ENCODE measurements at regions of chr16 and their contacts with region 1.

Region 1: GRCh38 chr16:69396187-69397061 is 10.6 kb upstream of the TERF2 start:
- DNase-seq: peak; percentile 83
- H3K4me3 Mint-ChIP-seq: peak overlapping the region; percentile 62
- H3K27ac Mint-ChIP-seq: peak overlapping the region; percentile 91
- H3K4me1 Mint-ChIP-seq: peaks cover 48% of the 10 kb centered on the region
- H3K27me3 Mint-ChIP-seq: no peaks in the 10 kb centered on the region
- CTCF ChIP-seq: peak; percentile 67

Region 2: GRCh38 chr16:69286941-69287713 is 109.3 kb before region 1 on chr16:
- CTCF ChIA-PET with region 1: no interaction called
- intact Hi-C with region 1: no loop called
- DNase-seq: peak; percentile 56
- H3K4me3 Mint-ChIP-seq: no peak overlapping the region
- H3K27ac Mint-ChIP-seq: no peak overlapping the region
- H3K4me1 Mint-ChIP-seq: no peaks in the 10 kb centered on the region
- H3K27me3 Mint-ChIP-seq: no peaks in the 10 kb centered on the region
- CTCF ChIP-seq: peak; percentile 76

Region 3: DNA sequence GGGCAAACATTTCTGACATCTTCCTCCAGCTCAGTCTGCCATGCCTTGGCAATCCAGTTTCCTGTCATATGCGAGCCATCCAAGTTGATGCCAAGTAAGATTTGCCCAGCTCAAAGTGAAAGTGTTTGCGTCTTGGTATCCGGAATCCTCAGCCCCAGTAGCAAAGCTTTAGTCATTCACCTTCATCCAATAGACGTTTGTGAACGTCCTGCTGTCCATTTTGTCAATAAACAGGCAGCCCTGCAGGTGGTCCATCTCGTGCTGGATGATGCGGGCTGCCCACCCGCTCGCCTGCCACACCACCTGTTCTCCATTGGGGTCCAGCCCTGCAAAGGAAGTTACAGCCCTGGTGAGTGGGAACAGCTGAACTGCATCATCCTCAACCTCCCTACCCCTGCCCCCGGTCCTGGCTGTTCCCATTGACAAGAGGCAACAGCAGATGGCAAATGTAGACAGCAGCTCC is 67.5 kb before region 1 on chr16:
- CTCF ChIA-PET with region 1: no interaction called
- intact Hi-C with region 1: no loop called
- DNase-seq: no peak
- H3K4me3 Mint-ChIP-seq: peak overlapping the region; percentile 99
- H3K27ac Mint-ChIP-seq: peak overlapping the region; percentile 81
- H3K4me1 Mint-ChIP-seq: peaks cover 33% of the 10 kb centered on the region
- H3K27me3 Mint-ChIP-seq: no peaks in the 10 kb centered on the region
- CTCF ChIP-seq: no peak

Region 4: GRCh38 chr16:69424053-69424934 is 27.9 kb after region 1 on chr16 and contains the start of gene CYB5B:
- CTCF ChIA-PET with region 1: interaction called, 4 read pairs
- intact Hi-C with region 1: loop called (anchors 2 kb)
- DNase-seq: peak; percentile 95
- H3K4me3 Mint-ChIP-seq: peak within 1 kb of the TSS; percentile 91
- H3K27ac Mint-ChIP-seq: peak within 1 kb of the TSS; percentile 97
- H3K4me1 Mint-ChIP-seq: no peaks in the 10 kb centered on the region
- H3K27me3 Mint-ChIP-seq: no peaks in the 10 kb centered on the region
- CTCF ChIP-seq: no peak
- total RNA-seq, gene CYB5B: 177 and 179 TPM in 2 replicates

Region 5: GRCh38 chr16:69443927-69444631 is 47.7 kb after region 1 on chr16:
- CTCF ChIA-PET with region 1: no interaction called
- intact Hi-C with region 1: no loop called
- DNase-seq: no peak
- H3K4me3 Mint-ChIP-seq: no peak overlapping the region
- H3K27ac Mint-ChIP-seq: no peak overlapping the region
- H3K4me1 Mint-ChIP-seq: peaks cover 14% of the 10 kb centered on the region
- H3K27me3 Mint-ChIP-seq: no peaks in the 10 kb centered on the region
- CTCF ChIP-seq: no peak

Region 6: DNA sequence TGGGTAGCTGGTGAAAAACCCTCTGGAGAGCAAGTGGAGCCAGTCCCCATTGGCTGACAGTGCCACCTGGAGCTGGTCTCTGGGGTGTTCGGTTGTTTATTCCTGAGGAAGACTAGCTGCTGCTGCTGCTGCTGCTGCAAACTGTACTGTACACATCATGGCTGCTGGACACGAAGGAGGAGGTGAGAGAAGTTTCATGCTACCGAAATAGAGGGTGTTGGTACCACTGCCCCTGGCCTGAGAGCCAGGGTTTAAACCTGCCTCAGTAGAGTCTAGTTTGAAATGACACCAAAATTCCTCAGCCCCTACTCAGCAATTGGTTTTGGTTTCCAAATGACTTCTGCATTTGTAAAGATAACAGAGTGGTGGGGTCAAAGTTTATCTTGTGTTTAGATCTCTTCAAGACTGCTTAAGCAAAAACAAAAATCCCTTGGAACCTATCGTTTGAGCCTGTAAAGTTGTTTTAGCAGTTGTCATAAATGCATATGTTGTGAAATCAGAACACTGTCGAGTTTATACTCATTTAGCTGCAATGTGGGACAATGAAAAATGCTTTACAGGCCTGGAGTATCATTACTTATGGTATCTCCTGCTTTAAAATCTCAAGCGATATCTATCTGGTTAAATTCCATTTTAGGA is 68.8 kb after region 1 on chr16:
- CTCF ChIA-PET with region 1: interaction called, 14 read pairs
- intact Hi-C with region 1: loop called (anchors 5 kb)
- DNase-seq: peak; percentile 12
- H3K4me3 Mint-ChIP-seq: no peak overlapping the region
- H3K27ac Mint-ChIP-seq: no peak overlapping the region
- H3K4me1 Mint-ChIP-seq: peaks cover 19% of the 10 kb centered on the region
- H3K27me3 Mint-ChIP-seq: no peaks in the 10 kb centered on the region
- CTCF ChIP-seq: no peak

Region 7: DNA sequence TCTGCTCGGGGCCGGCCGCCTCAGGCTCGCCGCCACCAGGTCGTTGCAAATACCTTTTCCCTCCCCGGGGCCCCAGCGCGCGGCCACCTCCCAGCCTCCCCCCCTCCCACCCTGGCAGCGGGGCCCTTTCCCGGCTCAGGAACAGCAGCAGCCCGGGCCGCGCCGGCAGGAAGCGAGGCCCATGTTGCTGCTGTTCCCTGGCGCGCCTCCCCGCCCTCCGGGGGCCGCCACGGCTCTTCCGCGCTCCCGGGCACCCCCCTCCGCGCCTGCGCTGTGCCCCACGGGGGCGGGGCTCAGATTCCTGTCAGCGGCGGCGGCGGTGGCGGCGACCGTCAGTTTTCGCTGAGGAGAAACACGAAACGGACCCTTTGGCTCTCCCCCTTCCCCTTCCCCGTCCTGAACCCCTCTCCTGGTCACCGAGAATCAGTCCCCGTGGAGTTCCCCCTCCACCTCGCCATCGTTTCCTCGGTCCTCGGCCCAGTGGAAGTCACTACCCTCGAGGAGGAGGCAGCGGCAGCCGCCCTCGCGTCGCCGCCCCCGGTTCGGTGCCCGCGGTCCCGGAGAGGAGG is 169.3 kb after region 1 on chr16 and contains the start of gene NFAT5:
- CTCF ChIA-PET with region 1: interaction called, 8 read pairs
- intact Hi-C with region 1: loop called (anchors 2 kb)
- DNase-seq: peak; percentile 96
- H3K4me3 Mint-ChIP-seq: peak within 1 kb of the TSS; percentile 82
- H3K27ac Mint-ChIP-seq: peak within 1 kb of the TSS; percentile 90
- H3K4me1 Mint-ChIP-seq: peaks cover 15% of the 10 kb centered on the region
- H3K27me3 Mint-ChIP-seq: no peaks in the 10 kb centered on the region
- CTCF ChIP-seq: no peak
- total RNA-seq, gene NFAT5: 57.9 and 64.3 TPM in 2 replicates

Region 8: DNA sequence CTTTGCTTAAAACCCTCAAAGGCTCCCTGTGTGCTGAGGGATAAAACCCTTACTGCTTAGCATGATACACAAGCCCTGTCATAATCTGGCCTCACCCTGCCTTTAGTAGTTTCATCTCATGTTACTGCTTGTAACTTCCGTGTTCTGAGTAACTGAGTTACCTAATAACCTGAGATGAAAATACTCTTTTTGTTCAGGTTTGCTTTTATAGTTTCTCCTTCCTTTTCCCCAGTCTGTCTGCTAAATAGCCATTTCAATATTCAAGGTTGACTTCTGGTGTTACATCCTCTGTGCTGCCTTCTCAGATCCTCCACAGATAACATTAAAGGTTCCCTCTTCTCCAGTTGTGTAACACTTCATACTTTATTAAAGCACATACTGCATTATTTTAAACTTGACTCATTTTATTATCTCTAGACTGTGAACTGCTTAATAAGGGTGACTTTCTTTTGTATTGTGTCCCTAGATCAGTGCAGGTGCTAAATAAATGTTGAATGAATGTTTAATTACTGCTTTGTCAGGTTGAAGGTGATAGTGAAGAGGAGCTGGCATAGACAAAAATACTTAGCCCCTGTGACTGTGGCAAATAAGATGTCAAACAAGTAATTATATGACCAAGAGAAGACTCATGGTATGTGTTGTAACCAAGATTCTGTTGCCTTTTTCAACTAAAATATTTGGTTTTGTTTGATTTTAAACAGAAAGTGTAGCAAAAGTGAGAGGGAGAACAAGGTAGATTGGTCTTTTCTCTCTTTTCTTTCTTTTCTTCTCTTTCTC is 217.1 kb after region 1 on chr16:
- CTCF ChIA-PET with region 1: interaction called, 3 read pairs
- intact Hi-C with region 1: loop called (anchors 5 kb)
- DNase-seq: peak; percentile 51
- H3K4me3 Mint-ChIP-seq: peak overlapping the region; percentile 5
- H3K27ac Mint-ChIP-seq: peak overlapping the region; percentile 64
- H3K4me1 Mint-ChIP-seq: peaks cover 58% of the 10 kb centered on the region
- H3K27me3 Mint-ChIP-seq: no peaks in the 10 kb centered on the region
- CTCF ChIP-seq: no peak

Region 9: GRCh38 chr16:69709456-69710084 is 313.1 kb after region 1 on chr16:
- CTCF ChIA-PET with region 1: no interaction called
- intact Hi-C with region 1: loop called (anchors 2 kb)
- DNase-seq: no peak
- H3K4me3 Mint-ChIP-seq: no peak overlapping the region
- H3K27ac Mint-ChIP-seq: peak overlapping the region; percentile 37
- H3K4me1 Mint-ChIP-seq: peaks cover 33% of the 10 kb centered on the region
- H3K27me3 Mint-ChIP-seq: no peaks in the 10 kb centered on the region
- CTCF ChIP-seq: peak; percentile 48

Region 10: DNA sequence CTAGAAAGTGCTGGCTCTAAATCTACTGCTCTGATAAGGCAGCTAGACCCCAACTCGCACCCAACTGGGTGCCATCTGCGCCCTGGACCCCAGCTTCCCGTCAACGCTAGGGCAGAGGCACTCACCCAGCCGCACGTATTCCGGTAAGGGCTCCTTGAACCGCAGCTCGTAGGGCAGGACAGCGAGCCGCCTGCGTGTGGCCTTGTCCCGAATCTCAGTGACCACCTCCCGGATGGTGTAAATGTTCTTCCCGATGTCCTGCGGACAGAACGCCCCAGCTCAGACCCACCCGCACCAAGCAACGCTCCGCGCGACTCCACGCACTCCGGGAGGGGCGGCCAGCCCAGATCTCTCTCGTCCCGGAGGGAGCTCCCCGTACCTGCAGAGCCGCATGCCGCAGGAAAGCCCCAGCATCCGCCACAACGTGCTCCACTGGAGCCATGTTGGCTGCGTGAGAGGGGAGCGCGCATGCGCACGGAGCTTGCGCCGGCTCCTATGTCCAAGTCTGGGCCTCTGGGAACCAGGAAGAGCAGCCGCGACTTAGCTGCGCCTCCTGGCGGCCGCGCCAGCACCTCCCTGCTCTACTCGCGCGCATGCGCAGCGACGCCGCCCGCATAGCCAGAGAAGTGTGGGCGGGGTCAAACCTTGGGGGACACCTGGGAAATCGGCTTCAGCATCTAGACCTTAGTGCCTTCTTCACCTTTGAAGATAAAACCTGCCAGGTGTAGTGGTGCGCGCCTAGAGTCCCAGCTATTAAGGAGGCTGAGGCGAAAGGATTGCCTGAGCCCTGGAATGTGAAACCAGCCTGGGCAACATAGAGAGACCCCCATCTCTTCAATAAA is 358.3 kb after region 1 on chr16 and contains the start of gene NOB1:
- CTCF ChIA-PET with region 1: interaction called, 7 read pairs
- intact Hi-C with region 1: loop called (anchors 5 kb)
- DNase-seq: peak; percentile 98
- H3K4me3 Mint-ChIP-seq: peak within 1 kb of the TSS; percentile 98
- H3K27ac Mint-ChIP-seq: peak within 1 kb of the TSS; percentile 93
- H3K4me1 Mint-ChIP-seq: peaks cover 16% of the 10 kb centered on the region
- H3K27me3 Mint-ChIP-seq: peaks cover 13% of the 10 kb centered on the region
- CTCF ChIP-seq: peak; percentile 97
- total RNA-seq, gene NOB1: 82.4 and 88.2 TPM in 2 replicates

Measured in Calu3 (cell line).